Left cardiac atrium (tissue), 4 donors: ENCODE measurements at regions of chr9 and their contacts with region 1.

Region 1: GRCh38 chr9:124708633-124709291 is 62.3 kb downstream of the NR6A1 start:
- DNase-seq: no peak
- ATAC-seq: no peak

Region 2: DNA sequence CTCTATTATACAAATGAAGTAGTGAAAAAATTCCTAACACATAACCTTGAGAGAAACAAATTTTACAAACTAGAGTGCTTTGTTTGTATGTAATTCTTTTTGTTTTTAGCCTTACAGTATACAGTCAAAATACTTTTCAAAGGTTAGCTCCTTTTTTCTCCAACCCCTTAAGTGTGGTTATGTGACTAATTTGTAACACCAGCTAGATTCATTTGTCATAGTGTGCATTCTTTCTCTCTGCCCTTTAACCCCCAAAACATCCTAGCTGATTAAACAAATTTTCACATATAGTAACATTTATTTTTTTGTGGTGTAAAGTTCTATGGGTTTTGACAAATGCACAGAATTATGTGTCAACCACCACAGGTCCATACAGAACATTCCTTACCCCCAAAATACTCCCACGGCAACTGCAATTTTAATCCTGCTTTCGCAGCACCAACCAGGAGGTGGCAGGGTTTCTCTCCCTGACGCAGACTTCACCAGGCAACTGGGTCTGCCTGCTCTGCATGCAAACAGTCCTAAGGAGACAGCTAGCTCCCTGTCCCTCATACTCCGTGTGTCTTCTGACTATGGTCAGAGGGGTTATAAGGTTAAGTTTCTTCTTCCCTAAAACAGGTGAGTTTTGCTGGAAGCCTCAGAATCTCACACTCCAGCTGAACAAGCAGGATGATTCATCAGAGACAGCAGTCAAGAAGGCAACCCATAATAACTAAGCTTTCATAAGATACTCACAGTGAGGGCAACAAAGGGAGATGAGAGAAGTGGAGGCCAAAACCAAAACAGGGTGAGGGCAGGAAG is 157.1 kb before region 1 on chr9:
- intact Hi-C with region 1: loop called in 1 of 2 experiments (anchors 5 kb)
- DNase-seq: no peak
- ATAC-seq: peak; percentile 77 to 80

Region 3: GRCh38 chr9:124617471-124618141 is 91.2 kb before region 1 on chr9:
- intact Hi-C with region 1: loop called (anchors 1 to 2 kb)
- DNase-seq: peak; percentile 78
- ATAC-seq: peak; percentile 89